ENCODE measurements at regions of chr2 and their contacts with region 1.

Region 1: GRCh38 chr2:168723275-168723899 is 79.0 kb upstream of the NOSTRIN start:
- DNase-seq: no peak
- H3K4me3 Mint-ChIP-seq: no peak overlapping the region
- H3K27ac Mint-ChIP-seq: no peak overlapping the region
- H3K4me1 Mint-ChIP-seq: peaks cover 6% of the 10 kb centered on the region
- H3K27me3 Mint-ChIP-seq: no peaks in the 10 kb centered on the region

Region 2: GRCh38 chr2:167592441-167592840 is 1130.9 kb before region 1 on chr2:
- CTCF ChIA-PET with region 1: no interaction called
- intact Hi-C with region 1: no loop called
- DNase-seq: no peak
- H3K4me3 Mint-ChIP-seq: no peak overlapping the region
- H3K27ac Mint-ChIP-seq: no peak overlapping the region
- H3K4me1 Mint-ChIP-seq: no peaks in the 10 kb centered on the region
- H3K27me3 Mint-ChIP-seq: no peaks in the 10 kb centered on the region

Region 3: DNA sequence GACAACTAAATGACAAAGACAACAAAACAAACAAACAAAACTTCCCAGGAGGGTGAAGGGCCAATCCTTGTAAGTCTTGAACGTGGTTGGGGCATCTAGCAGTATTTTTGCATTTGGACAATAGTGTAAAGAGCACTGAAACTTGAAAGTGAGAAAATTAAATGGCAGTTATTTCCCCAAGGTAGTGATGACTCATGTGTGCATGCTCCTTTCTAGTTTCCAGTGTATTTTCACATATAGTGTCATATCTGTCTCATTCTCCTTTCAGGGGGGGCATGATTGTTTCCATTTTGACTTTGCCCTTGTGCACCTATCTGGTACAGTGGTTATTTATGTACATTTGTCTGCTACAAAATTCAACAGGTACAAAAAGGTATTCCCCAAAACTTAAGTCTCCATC is 227.9 kb before region 1 on chr2:
- CTCF ChIA-PET with region 1: no interaction called
- intact Hi-C with region 1: loop called (anchors 1 kb)
- DNase-seq: peak; percentile 35
- H3K4me3 Mint-ChIP-seq: no peak overlapping the region
- H3K27ac Mint-ChIP-seq: no peak overlapping the region
- H3K4me1 Mint-ChIP-seq: peaks cover 61% of the 10 kb centered on the region
- H3K27me3 Mint-ChIP-seq: no peaks in the 10 kb centered on the region